Calu3 (cell line): ENCODE measurements at regions of chr10 and their contacts with region 1.

Region 1: GRCh38 chr10:20215547-20216152 is 399.4 kb downstream of the PLXDC2 start:
- DNase-seq: no peak
- H3K4me3 Mint-ChIP-seq: no peak overlapping the region
- H3K27ac Mint-ChIP-seq: no peak overlapping the region
- H3K4me1 Mint-ChIP-seq: no peaks in the 10 kb centered on the region
- H3K27me3 Mint-ChIP-seq: no peaks in the 10 kb centered on the region
- CTCF ChIP-seq: no peak

Region 2: GRCh38 chr10:20181434-20181833 is 34.2 kb before region 1 on chr10:
- CTCF ChIA-PET with region 1: interaction called, 10 read pairs
- intact Hi-C with region 1: no loop called
- DNase-seq: no peak
- H3K4me3 Mint-ChIP-seq: no peak overlapping the region
- H3K27ac Mint-ChIP-seq: no peak overlapping the region
- H3K4me1 Mint-ChIP-seq: no peaks in the 10 kb centered on the region
- H3K27me3 Mint-ChIP-seq: no peaks in the 10 kb centered on the region
- CTCF ChIP-seq: no peak

Region 3: GRCh38 chr10:20343036-20343435 is 127.4 kb after region 1 on chr10:
- CTCF ChIA-PET with region 1: no interaction called
- intact Hi-C with region 1: no loop called
- DNase-seq: no peak
- H3K4me3 Mint-ChIP-seq: no peak overlapping the region
- H3K27ac Mint-ChIP-seq: no peak overlapping the region
- H3K4me1 Mint-ChIP-seq: no peaks in the 10 kb centered on the region
- H3K27me3 Mint-ChIP-seq: no peaks in the 10 kb centered on the region
- CTCF ChIP-seq: no peak